Tibial artery (tissue), 4 donors: ENCODE measurements at regions of chr6 and their contacts with region 1.

Region 1: DNA sequence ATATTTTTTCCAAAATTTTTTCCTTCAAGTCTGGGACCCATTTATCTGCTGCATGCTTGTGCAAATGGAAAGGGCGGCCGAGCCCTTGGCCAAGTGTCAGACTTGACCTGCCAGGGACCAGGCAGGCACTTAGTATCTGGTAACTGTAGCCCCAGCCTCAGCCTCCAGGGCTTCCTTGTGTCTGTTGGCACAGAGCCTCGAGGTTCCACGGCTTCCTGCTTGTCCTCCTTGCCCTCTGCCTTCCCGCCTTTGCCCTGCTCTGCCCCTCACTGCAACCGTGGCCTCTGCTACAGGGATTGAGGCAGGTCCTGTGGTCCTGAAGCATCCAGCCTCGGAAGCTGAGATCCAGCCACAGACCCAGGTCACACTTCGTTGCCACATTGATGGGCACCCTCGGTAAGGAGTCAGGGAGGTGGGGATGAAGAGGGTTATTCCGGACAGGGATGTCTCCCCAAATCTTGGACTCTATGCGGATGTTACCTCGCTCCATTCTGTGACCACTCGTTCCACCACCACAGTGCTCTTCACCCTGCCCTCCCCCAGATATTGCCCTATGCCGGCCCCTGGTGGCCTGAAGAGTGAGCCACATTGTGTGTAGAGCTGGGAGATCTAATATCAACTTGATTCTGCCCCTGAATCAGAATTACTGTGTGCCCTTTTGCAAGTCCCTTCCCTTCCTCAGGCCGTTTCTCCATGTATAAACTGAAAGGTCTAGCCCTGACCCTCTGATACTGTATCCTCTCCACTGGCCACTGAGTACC is 41.5 kb upstream of the SRF start:
- DNase-seq: no peak
- H3K4me3 ChIP-seq: no peak overlapping the region
- H3K27ac ChIP-seq: no peak overlapping the region
- H3K4me1 ChIP-seq: peaks cover 0 to 14% (median 5%) of the 10 kb centered on the region in 4 donors
- H3K27me3 ChIP-seq: peaks cover 0 to 4% of the 10 kb centered on the region in 2 donors
- CTCF ChIP-seq: peak; percentile 57

Region 2: GRCh38 chr6:42831237-42831636 is 298.4 kb before region 1 on chr6:
- intact Hi-C with region 1: no loop called
- DNase-seq: no peak
- H3K4me3 ChIP-seq: no peak overlapping the region
- H3K27ac ChIP-seq: no peak overlapping the region
- H3K4me1 ChIP-seq: peaks cover 0 to 12% (median 6%) of the 10 kb centered on the region in 4 donors
- H3K27me3 ChIP-seq: no peaks in the 10 kb centered on the region
- CTCF ChIP-seq: no peak

Region 3: DNA sequence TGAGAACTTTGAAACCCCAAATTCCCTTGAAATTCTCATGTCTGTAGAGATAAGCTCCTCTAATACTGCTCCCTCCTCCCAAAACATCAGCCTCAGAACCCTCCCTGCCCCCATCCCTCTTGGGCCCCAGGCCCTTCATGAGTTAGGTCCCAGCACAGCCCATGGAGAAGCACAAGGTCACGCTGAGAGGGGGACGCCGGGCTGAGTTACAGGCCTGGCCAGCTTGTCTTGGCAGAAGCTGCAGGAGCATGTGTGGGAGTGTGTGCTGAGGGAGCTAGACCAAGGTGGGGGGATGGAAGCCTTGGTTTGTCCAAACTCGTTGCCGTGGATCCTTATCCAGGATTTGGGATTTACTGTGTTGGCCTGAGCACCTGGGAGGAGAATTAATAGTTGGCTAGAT is 222.3 kb before region 1 on chr6:
- intact Hi-C with region 1: loop called (anchors 5 kb)
- DNase-seq: no peak
- H3K4me3 ChIP-seq: no peak overlapping the region
- H3K27ac ChIP-seq: no peak overlapping the region
- H3K4me1 ChIP-seq: peaks cover 0 to 7% (median 6%) of the 10 kb centered on the region in 4 donors
- H3K27me3 ChIP-seq: peaks cover 0 to 13% of the 10 kb centered on the region in 2 donors
- CTCF ChIP-seq: no peak

Region 4: DNA sequence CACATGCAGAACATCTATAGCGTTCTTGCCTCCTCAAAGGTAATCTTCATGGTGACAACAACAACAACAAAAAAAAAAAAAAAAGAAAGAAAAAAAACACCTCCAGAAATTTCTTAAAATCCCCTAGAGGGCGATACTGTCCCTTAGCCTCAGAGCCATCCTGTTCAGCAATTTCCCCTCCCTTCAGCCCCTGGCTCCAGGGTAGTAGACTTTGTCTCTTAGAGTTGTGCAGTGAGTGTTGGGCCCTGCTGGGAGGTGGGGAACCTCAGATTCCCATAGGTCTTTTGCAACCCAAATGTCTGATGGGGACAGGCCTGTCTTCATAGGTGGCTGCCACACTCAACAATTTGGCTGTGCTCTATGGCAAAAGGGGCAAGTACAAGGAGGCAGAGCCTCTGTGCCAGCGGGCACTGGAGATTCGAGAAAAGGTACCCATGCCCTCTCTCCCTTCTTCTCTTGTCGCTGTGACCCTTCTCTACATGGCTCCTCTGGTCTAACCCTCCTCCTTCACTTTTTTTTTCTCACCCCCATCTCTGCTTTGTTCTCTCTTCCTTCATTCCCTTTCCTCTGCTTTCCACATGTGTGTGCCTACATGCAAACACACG is 59.5 kb before region 1 on chr6:
- intact Hi-C with region 1: loop called (anchors 10 kb)
- DNase-seq: no peak
- H3K4me3 ChIP-seq: no peak overlapping the region
- H3K27ac ChIP-seq: no peak overlapping the region
- H3K4me1 ChIP-seq: peaks cover 0 to under 1% (median 0%) of the 10 kb centered on the region in 4 donors
- H3K27me3 ChIP-seq: peaks cover 0 to under 1% of the 10 kb centered on the region in 2 donors
- CTCF ChIP-seq: peak in 1 of 2 experiments; percentile 20

Region 5: DNA sequence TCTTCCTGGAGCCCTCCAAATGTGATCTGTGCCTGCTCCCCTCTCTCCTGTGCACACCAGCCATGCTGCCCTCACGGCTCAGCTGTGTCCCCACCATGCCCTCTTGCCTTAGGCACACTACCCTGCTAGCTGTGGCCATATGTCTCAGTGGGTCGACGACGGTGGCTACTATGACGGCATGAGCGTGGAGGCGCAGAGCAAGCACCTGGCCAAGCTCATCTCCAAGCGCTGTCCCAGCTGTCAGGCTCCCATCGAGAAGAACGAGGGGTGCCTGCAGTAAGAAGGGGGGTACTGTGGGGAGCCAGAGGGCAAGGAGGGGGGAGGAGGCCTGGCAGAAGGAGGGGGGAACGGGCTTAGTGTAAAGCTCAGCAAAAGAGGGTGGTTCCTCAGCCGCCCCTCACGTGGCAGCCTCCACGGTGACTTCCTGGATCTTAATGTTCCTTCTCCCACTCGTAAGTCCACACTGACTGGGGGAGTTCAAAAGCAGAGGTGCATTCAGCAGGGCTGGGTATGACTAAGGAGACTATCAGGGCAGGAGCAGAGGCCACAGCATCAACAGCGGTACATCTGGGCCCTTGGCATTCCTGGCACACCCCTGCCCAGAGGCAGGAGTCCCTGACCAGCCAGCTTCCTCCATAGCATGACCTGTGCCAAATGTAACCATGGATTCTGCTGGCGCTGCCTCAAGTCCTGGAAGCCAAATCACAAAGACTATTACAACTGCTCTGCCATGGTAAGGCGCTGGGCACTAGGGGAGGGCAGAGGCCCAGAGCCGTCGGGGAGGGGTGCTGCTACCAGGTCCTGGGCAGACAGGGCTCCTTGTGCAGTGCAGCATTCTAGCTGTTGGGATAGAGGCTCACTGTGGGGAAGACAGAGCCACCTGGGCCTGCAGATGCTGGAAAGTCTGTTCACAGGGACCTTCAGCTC is 91.7 kb after region 1 on chr6:
- intact Hi-C with region 1: no loop called
- DNase-seq: peak in 1 of 2 donors; percentile 55
- H3K4me3 ChIP-seq: no peak overlapping the region
- H3K27ac ChIP-seq: no peak overlapping the region
- H3K4me1 ChIP-seq: peaks cover 0 to 7% (median 0%) of the 10 kb centered on the region in 4 donors
- H3K27me3 ChIP-seq: no peaks in the 10 kb centered on the region
- CTCF ChIP-seq: no peak